ENCODE measurements at regions of chr1 and their contacts with region 1.

Region 1: DNA sequence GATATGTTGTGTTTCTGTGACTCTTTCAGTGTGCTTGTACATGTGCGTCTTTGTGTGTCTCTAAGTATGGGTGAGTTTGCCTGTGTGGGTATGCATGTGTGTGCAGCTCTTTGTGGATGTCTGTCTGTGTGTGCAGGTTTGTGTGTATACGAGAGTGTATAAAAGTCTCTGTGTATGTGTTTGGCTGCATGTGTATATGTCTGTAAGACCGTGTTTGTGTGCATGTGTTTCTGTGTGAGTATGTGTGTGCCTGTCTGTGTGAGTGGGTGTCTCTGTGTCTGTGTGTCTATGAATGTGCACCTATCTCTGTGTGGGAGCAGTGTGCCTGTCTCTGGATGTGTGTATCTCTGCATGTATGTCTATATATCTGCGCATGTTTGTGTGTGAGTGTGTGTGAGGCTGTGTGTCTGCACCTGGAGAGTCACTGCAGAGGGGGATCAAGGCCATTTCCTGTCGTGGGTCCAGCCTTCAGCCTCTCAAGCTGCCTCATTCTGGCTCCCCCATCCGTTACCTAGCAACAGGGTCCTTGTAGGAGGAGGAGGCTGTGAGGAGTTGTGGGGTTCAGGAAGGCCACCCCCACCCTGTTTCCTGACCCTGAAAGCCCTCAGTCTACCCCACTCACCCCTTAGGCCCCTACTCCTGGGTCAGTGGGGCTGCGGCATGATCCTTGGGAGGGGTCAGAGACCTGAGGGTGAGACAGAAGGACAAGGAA is 10.4 kb downstream of the FGR start:
- DNase-seq: peak in 1 of 2 donors; percentile 29
- ATAC-seq: peak in 1 of 3 donors; percentile 1
- H3K4me3 ChIP-seq: peak overlapping the region; percentile 63
- H3K4me3 Mint-ChIP-seq: no peak overlapping the region
- H3K27ac ChIP-seq: peak overlapping the region; percentile 90
- H3K27ac Mint-ChIP-seq: no peak overlapping the region
- H3K4me1 ChIP-seq: peaks cover 95% of the 10 kb centered on the region
- H3K4me1 Mint-ChIP-seq: peaks cover 49 to 50% of the 10 kb centered on the region in 2 donors
- H3K27me3 ChIP-seq: no peaks in the 10 kb centered on the region
- H3K27me3 Mint-ChIP-seq: no peaks in the 10 kb centered on the region
- CTCF ChIP-seq: no peak

Region 2: DNA sequence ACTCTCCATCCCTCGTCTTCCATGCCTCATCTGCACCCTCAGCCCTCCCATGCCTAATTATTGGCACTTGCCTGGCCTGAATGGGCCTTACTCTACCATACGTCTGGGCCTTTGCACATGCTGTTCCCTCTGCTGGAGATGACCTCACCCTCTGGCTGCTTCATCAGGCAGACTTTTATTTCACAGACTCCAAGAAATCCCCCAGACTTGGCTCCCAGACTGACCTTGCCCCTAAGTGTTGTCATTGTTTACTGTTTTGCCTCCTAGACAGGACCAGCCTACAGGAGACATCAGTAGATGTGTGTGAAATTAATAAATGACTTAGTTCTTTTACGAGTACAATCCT is 15.4 kb before region 1 on chr1:
- intact Hi-C with region 1: loop called (anchors 1 kb)
- DNase-seq: peak in 1 of 2 donors; percentile 56
- ATAC-seq: peak in 2 of 3 donors; percentile 23 to 25
- H3K4me3 ChIP-seq: no peak overlapping the region
- H3K4me3 Mint-ChIP-seq: no peak overlapping the region
- H3K27ac ChIP-seq: peak overlapping the region; percentile 62
- H3K27ac Mint-ChIP-seq: no peak overlapping the region
- H3K4me1 ChIP-seq: peaks cover 80% of the 10 kb centered on the region
- H3K4me1 Mint-ChIP-seq: peaks cover 12 to 26% of the 10 kb centered on the region in 2 donors
- H3K27me3 ChIP-seq: no peaks in the 10 kb centered on the region
- H3K27me3 Mint-ChIP-seq: no peaks in the 10 kb centered on the region
- CTCF ChIP-seq: no peak

Measured in natural killer cell (primary cell).